ENCODE measurements at regions of chr15 and their contacts with region 1.

Region 1: DNA sequence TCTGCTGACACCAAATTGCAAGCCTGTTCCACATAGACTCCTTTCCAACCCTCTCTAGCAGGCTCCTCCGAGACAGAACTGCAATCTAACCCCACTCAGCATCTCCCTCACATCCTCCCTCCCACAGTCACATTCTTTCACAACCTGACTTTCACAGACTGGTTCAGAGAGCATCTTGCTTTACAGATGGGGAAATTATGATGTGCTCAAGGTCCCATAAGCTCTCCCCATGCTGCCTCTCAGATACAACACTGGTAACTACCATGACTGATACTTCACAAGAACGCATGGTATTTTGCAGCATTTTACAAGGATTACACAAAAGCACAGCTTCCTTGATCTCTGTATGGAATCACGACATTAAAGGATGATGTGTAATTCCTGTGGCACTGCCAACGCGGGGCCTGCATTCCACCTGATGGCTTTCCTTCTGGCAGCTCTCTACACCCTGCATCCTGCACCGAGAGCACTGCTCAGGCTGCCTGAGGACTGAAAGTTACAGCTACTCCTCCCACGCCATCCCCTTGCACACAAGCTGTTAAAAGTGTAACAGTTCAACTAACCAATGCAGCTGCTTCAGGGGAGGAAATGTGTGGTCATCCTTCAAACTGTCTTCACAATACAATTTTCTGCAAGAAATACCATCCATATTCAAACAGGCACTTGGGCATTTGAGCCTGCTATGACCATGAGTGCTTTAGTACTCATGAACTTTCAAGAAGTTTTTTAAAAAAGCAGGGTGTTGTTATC is 27.6 kb downstream of the TBC1D2B start:
- DNase-seq: peak; percentile 80
- ATAC-seq: peak; percentile 80
- H3K4me3 Mint-ChIP-seq: peak overlapping the region; percentile 60
- H3K27ac Mint-ChIP-seq: peak overlapping the region; percentile 94
- H3K4me1 Mint-ChIP-seq: peaks cover 94% of the 10 kb centered on the region
- H3K27me3 Mint-ChIP-seq: no peaks in the 10 kb centered on the region

Region 2: DNA sequence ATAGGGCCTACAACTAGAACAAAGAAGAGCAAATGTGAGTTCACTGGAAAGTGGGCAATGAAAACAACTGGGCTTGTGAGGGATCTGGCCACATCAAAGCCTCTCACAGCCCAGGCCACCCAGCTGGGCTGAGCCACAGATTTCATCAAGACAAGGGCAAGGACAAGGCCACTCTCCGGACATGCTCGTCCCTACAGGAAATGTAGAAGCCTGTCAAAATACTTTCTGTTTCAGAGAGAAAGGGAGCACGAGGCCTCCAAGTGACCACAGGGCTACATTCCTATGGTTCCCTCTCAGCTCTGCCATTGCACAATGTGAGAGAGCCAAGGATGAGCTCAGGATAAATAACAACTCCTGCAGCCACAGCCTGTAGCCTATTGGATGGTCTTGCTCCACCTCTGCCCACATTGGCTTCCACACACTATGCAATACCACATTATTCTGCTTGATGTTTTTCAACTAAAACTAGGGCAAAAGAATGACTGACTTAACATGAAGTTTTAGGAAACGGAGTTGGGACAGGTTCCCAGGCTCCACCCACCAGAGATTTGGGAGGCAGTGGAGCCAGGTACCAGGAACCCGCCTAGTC is 15.5 kb after region 1 on chr15:
- CTCF ChIA-PET with region 1: interaction called, 305 read pairs
- POLR2A ChIA-PET with region 1: interaction called, 71 read pairs
- DNase-seq: no peak
- ATAC-seq: peak; percentile 18
- H3K4me3 Mint-ChIP-seq: no peak overlapping the region
- H3K27ac Mint-ChIP-seq: no peak overlapping the region
- H3K4me1 Mint-ChIP-seq: peaks cover 10% of the 10 kb centered on the region
- H3K27me3 Mint-ChIP-seq: no peaks in the 10 kb centered on the region

Region 3: GRCh38 chr15:78077058-78077877 is 27.4 kb after region 1 on chr15 and contains the start of gene TBC1D2B:
- CTCF ChIA-PET with region 1: interaction called, 305 read pairs
- POLR2A ChIA-PET with region 1: interaction called, 6 read pairs
- DNase-seq: peak; percentile 69
- ATAC-seq: peak; percentile 83
- H3K4me3 Mint-ChIP-seq: peak within 1 kb of the TSS; percentile 100
- H3K27ac Mint-ChIP-seq: peak within 1 kb of the TSS; percentile 94
- H3K4me1 Mint-ChIP-seq: peaks cover 50% of the 10 kb centered on the region
- H3K27me3 Mint-ChIP-seq: no peaks in the 10 kb centered on the region
- total RNA-seq, gene TBC1D2B: 109 to 119 TPM

Measured in activated CD8-positive, alpha-beta T cell treated with anti-CD3 and anti-CD28 coated beads, Interleukin-2, amount 10 ng/mL, durations not matched to agents 7 days and 5 days (primary cell).